Panc1 (cell line): ENCODE measurements at regions of chr17 and their contacts with region 1.

Region 1: GRCh38 chr17:77061669-77062068 is 79.1 kb upstream of the SEC14L1 start:
- DNase-seq: no peak
- ATAC-seq: no peak
- H3K4me3 ChIP-seq: no peak overlapping the region
- H3K27ac ChIP-seq: no peak overlapping the region
- H3K4me1 ChIP-seq: no peaks in the 10 kb centered on the region
- H3K27me3 ChIP-seq: no peaks in the 10 kb centered on the region
- CTCF ChIP-seq: no peak

Region 2: GRCh38 chr17:76781056-76781982 is 280.4 kb before region 1 on chr17:
- CTCF ChIA-PET with region 1: no interaction called
- POLR2A ChIA-PET with region 1: interaction called, 11 read pairs
- in situ Hi-C with region 1: no loop called
- intact Hi-C with region 1: no loop called
- DNase-seq: no peak
- ATAC-seq: peak; percentile 69; the same call in 1 of the 2 replicates
- H3K4me3 ChIP-seq: no peak overlapping the region
- H3K27ac ChIP-seq: no peak overlapping the region
- H3K4me1 ChIP-seq: no peaks in the 10 kb centered on the region
- H3K27me3 ChIP-seq: no peaks in the 10 kb centered on the region
- CTCF ChIP-seq: no peak

Region 3: GRCh38 chr17:77079025-77079714 is 17.5 kb after region 1 on chr17:
- CTCF ChIA-PET with region 1: interaction called, 12 read pairs
- POLR2A ChIA-PET with region 1: no interaction called
- in situ Hi-C with region 1: no loop called
- intact Hi-C with region 1: no loop called
- DNase-seq: no peak
- ATAC-seq: no peak
- H3K4me3 ChIP-seq: no peak overlapping the region
- H3K27ac ChIP-seq: no peak overlapping the region
- H3K4me1 ChIP-seq: peaks cover 6% of the 10 kb centered on the region; the same call in 1 of the 2 replicates
- H3K27me3 ChIP-seq: no peaks in the 10 kb centered on the region
- CTCF ChIP-seq: no peak